Activated CD8-positive, alpha-beta T cell treated with anti-CD3 and anti-CD28 coated beads, Interleukin-2, amount 10 ng/mL, durations not matched to agents 7 days and 5 days (primary cell): ENCODE measurements at regions of chr3 and their contacts with region 1.

Region 1: DNA sequence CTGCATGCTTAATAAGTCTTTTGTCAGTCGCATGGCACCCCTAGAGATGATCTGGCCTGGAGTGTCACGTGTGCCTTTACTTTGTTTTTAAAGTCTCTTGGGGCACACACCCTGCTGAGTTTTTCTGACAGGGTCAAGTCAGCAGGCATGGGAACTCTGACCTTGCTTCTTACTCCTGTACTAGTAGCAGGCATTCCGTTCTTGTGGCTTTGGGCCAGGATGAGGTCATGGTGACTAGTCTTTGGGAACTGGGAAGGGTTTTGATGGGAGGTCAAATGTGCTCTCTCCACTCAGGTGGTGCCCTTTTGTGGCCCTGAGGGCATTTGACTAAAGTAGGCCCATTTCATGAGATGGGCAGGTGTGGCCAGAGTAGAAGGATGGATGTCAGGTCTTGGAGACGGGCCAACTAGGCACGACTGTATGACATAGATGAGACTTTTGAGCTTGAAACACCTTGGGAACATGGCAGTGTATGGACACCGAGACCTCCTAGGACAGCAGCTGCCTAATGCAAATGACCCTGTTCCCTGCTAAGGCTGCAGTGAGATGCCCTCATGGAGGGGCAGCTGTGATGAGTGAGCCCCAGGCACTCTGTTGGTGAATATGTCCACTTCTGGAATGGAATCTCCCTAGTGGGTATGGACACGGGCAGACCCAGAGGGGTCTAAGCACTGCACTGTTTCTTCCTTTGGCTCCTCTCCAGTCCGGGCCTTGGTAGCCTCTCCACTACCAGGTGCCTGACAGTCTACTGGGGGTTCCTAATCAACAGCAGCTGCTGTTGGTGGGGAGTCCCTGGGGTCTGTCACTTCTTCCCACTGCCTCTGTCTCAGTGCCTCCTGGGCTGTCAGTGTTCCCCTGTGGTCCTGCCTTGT is 16.4 kb downstream of the SRPRB start:
- DNase-seq: no peak
- ATAC-seq: no peak
- H3K4me3 Mint-ChIP-seq: no peak overlapping the region
- H3K27ac Mint-ChIP-seq: no peak overlapping the region
- H3K4me1 Mint-ChIP-seq: no peaks in the 10 kb centered on the region
- H3K27me3 Mint-ChIP-seq: no peaks in the 10 kb centered on the region

Region 2: DNA sequence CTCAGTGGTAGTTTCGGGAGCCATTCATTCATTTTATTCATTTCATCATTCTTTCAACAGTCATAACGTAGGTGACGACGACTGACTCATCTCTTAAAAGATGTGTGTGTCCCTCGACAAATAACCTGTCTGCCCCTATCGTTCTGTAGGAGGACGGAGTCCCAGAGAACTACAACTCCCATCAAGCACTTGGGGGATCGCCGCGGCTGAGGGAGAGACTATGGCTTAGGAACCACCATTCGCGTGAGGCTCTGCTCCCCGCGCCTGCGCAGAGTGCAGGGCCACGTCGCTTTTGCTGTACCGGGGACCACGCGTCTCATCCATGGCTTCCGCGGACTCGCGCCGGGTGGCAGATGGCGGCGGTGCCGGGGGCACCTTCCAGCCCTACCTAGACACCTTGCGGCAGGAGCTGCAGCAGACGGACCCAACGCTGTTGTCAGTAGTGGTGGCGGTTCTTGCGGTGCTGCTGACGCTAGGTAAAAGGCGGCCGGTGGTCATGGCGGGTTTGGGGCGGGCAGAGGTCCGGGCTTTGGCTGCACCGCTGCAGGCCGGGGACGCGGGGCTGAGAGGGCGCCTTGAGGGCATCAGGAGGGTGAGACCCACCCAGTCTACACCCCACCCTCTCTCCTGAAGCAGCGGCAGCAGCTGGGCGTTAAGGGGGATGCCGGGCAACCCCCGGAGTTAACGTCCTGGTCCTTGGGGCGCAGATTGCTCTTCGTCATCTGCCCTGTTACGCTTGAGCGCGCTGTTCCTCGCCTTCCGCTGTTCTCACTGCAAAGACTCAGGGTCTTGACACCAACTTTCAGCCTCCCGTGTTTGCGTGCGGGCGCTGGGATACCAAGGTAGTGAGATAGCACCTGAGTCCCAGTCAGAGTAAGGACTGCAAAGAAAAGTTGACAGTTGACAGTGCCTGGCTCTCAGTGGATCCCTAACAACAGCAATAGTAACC is 16.2 kb before region 1 on chr3 and contains the start of gene SRPRB:
- CTCF ChIA-PET with region 1: interaction called, 10 read pairs
- POLR2A ChIA-PET with region 1: no interaction called
- DNase-seq: peak; percentile 97
- ATAC-seq: peak; percentile 99
- H3K4me3 Mint-ChIP-seq: peak within 1 kb of the TSS; percentile 98
- H3K27ac Mint-ChIP-seq: peak within 1 kb of the TSS; percentile 97
- H3K4me1 Mint-ChIP-seq: peaks cover 26% of the 10 kb centered on the region
- H3K27me3 Mint-ChIP-seq: peaks cover 10% of the 10 kb centered on the region
- total RNA-seq, gene SRPRB: 45.3 to 48.1 TPM

Region 3: GRCh38 chr3:133927540-133928066 is 105.6 kb after region 1 on chr3:
- CTCF ChIA-PET with region 1: interaction called, 30 read pairs
- POLR2A ChIA-PET with region 1: no interaction called
- DNase-seq: peak; percentile 70
- ATAC-seq: peak; percentile 96
- H3K4me3 Mint-ChIP-seq: peak overlapping the region; percentile 60
- H3K27ac Mint-ChIP-seq: no peak overlapping the region
- H3K4me1 Mint-ChIP-seq: peaks cover 9% of the 10 kb centered on the region
- H3K27me3 Mint-ChIP-seq: peaks cover 21% of the 10 kb centered on the region